ENCODE measurements at regions of chr7 and their contacts with region 1.

Region 1: GRCh38 chr7:137633133-137633532 is 213.6 kb downstream of the DGKI start:
- DNase-seq: no peak
- H3K4me3 ChIP-seq: no peak overlapping the region
- H3K27me3 ChIP-seq: peaks cover 4% of the 10 kb centered on the region
- CTCF ChIP-seq: no peak

Region 2: DNA sequence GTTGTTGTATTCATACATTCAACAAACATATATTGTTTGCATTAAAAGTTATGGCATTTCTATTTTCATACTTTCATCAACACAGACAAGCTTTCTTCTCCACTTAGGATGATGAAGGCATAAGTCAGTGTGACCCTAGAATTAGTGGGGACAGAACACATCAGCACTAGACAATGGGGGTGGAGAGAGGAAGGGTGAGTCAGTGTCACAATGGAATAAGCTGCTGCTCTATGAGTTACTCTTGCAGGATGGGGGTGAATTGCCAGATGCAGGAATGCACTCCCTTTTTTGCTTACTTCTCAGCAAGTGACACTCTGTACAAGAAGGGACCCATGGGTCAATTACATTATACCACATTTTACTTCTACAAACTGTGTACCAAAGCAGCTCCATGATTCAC is 139.6 kb after region 1 on chr7:
- CTCF ChIA-PET with region 1: no interaction called
- POLR2A ChIA-PET with region 1: interaction called, 11 read pairs
- DNase-seq: peak; percentile 73
- H3K4me3 ChIP-seq: no peak overlapping the region
- H3K27me3 ChIP-seq: no peaks in the 10 kb centered on the region
- CTCF ChIP-seq: no peak

Measured in BJ (cell line).